Ovary (tissue), 10 donors: ENCODE measurements at regions of chr2 and their contacts with region 1.

Region 1: DNA sequence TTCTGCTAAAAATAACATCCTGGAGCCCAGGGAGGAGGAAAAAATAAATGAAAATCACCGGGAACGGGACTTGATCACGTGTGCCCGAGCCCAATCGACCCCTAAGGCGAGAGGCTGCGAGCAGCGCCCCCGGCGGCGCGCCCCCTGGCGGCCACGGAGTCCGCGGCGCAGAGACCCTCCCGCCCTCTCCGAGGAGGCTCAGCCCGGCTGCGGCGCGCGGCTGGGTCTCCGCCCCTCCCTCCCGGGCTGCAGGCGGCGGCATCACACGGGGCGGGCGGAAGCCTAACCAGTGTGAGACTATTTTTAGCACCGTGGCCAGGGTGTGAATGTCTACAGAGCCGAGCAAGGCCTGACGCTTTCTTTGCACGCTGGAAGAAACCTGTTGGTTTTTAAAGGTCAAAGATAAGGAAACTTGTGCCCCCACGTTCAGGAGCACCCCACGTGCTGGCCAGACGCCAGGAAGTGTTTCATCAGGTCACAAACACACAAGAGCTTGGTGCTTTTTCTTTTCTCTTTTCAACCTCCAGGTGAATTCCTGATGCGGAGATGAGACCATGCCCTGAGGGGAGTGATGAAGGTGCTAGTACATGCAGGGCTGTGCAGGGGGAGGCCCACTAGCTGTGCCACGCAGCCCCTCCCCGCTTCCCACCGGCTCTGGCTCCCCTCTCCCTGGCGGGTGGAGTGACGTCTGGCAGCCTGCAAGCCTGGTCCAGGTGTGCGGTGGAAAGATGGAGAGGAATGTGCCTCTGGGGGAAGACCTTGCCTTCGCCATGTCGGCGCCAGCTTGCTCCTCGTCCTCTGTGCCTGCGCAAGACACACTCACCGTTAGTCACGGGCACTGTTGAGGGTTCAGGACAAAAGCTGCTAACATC is 35.3 kb upstream of the DNMT3A start:
- DNase-seq: peak; percentile 85 to 92 (median 89)
- H3K4me3 ChIP-seq: peak overlapping the region; percentile 19
- H3K27ac ChIP-seq: no peak overlapping the region
- H3K4me1 ChIP-seq: peaks cover 9% of the 10 kb centered on the region
- H3K27me3 ChIP-seq: no peaks in the 10 kb centered on the region
- CTCF ChIP-seq: peak; percentile 88 to 99 (median 88)
- EP300 ChIP-seq: no peak
- POLR2A ChIP-seq: no peak

Region 2: DNA sequence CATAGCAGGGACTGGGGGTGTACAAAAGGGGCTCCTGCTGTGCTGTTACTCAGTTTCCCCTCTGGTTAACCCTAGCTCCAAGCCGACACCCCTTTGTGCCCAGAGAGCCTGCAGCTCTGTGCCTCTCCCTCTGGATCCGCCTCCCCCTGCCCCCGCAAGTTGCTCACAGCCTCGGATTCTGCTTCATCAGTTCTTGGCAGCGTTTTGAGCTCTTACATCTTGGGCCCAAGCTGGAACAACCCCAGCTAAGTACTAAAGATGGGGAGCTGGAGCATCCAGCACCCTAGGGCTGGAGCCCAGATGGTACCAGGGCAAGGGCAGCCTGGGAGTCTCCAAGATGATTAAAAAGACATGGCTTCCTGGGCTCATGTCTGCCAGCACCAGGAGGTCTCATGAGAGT is 249.3 kb before region 1 on chr2:
- intact Hi-C with region 1: no loop called
- DNase-seq: no peak
- H3K4me3 ChIP-seq: no peak overlapping the region
- H3K27ac ChIP-seq: no peak overlapping the region
- H3K4me1 ChIP-seq: peaks cover 2% of the 10 kb centered on the region
- H3K27me3 ChIP-seq: no peaks in the 10 kb centered on the region
- CTCF ChIP-seq: no peak
- EP300 ChIP-seq: no peak
- POLR2A ChIP-seq: no peak

Region 3: DNA sequence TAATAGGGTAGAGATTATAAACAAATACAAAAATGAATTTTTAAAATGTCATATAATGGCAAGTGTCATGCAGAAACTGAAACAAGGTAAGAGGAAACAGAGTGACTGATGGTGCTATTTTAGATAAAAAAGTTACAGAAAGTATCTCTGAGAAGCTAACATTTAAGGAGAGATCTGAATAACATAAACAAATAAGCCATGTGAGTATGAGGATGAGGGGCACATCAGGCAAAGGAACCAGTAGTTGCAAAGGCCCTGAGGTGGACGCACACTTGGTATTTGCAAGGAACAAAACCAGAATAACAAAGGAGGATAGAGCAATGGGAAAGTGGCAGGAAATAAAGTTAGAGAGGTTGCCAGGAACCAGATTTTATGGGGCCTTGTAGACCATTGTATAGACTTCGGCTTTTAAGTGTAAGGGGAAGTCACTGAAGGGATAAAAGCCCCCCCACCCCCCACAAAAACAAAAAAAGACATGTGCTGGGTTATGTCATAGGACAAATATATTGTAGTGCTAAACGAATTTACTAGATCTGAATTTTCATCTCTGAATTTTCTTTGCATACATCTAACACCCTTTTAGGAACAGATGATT is 137.2 kb after region 1 on chr2:
- intact Hi-C with region 1: loop called in 2 of 4 experiments (anchors 5 to 10 kb)
- DNase-seq: no peak
- H3K4me3 ChIP-seq: no peak overlapping the region
- H3K27ac ChIP-seq: no peak overlapping the region
- H3K4me1 ChIP-seq: peaks cover 4% of the 10 kb centered on the region
- H3K27me3 ChIP-seq: no peaks in the 10 kb centered on the region
- CTCF ChIP-seq: no peak
- EP300 ChIP-seq: no peak
- POLR2A ChIP-seq: no peak

Region 4: GRCh38 chr2:25673300-25674076 is 296.5 kb after region 1 on chr2 and contains the start of gene DTNB:
- intact Hi-C with region 1: loop called in 1 of 4 experiments (anchors 10 kb)
- DNase-seq: peak; percentile 80 to 89 (median 88)
- H3K4me3 ChIP-seq: peak within 1 kb of the TSS; percentile 84
- H3K27ac ChIP-seq: peak within 1 kb of the TSS; percentile 37 to 92
- H3K4me1 ChIP-seq: no peaks in the 10 kb centered on the region
- H3K27me3 ChIP-seq: no peaks in the 10 kb centered on the region
- CTCF ChIP-seq: no peak
- EP300 ChIP-seq: peak; percentile 22
- POLR2A ChIP-seq: peak; percentile 33
- total RNA-seq, gene DTNB: 9.4 to 24.9 (median 17.6) TPM

Region 5: DNA sequence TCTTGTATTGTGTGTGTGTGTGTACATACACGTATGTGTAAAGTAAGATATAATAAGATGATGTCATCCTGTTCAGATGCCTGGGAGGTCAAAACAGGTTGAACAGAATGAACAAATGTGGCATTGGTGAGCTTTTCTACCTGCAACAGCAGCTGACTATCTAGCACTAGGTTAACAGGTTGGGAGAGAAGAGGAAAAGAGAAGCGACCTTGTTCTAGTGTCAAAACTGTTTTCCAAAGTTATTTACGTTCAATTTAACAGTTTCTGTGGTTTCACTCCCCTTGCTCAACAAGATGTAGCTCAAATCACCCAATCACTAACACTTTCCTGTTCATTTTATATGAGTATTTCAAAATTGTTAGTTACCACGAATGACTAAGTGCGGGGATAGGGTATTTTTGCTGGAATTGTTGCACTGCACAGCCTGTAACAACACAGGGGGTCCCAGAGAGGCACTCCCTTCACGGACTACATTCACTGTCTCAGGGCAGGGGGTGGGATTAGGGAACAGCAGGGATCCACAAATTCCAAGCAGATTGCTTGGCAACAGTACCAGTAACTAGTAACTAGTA is 363.9 kb after region 1 on chr2:
- intact Hi-C with region 1: no loop called
- DNase-seq: no peak
- H3K4me3 ChIP-seq: no peak overlapping the region
- H3K27ac ChIP-seq: no peak overlapping the region
- H3K4me1 ChIP-seq: peaks cover 7% of the 10 kb centered on the region
- H3K27me3 ChIP-seq: no peaks in the 10 kb centered on the region
- CTCF ChIP-seq: no peak
- EP300 ChIP-seq: no peak
- POLR2A ChIP-seq: no peak